ENCODE measurements at regions of chr11 and their contacts with region 1.

Region 1: GRCh38 chr11:46367244-46367915 is 14.1 kb upstream of the MDK start:
- DNase-seq: peak; percentile 85
- ATAC-seq: peak; percentile 93
- H3K4me3 Mint-ChIP-seq: no peak overlapping the region
- H3K27ac Mint-ChIP-seq: no peak overlapping the region
- H3K4me1 Mint-ChIP-seq: peaks cover 22% of the 10 kb centered on the region
- H3K27me3 Mint-ChIP-seq: no peaks in the 10 kb centered on the region

Region 2: GRCh38 chr11:46315033-46315738 is 52.2 kb before region 1 on chr11:
- CTCF ChIA-PET with region 1: interaction called, 10 read pairs
- DNase-seq: peak; percentile 82
- ATAC-seq: peak; percentile 73
- H3K4me3 Mint-ChIP-seq: no peak overlapping the region
- H3K27ac Mint-ChIP-seq: no peak overlapping the region
- H3K4me1 Mint-ChIP-seq: peaks cover 21% of the 10 kb centered on the region
- H3K27me3 Mint-ChIP-seq: peaks cover 2% of the 10 kb centered on the region

Region 3: DNA sequence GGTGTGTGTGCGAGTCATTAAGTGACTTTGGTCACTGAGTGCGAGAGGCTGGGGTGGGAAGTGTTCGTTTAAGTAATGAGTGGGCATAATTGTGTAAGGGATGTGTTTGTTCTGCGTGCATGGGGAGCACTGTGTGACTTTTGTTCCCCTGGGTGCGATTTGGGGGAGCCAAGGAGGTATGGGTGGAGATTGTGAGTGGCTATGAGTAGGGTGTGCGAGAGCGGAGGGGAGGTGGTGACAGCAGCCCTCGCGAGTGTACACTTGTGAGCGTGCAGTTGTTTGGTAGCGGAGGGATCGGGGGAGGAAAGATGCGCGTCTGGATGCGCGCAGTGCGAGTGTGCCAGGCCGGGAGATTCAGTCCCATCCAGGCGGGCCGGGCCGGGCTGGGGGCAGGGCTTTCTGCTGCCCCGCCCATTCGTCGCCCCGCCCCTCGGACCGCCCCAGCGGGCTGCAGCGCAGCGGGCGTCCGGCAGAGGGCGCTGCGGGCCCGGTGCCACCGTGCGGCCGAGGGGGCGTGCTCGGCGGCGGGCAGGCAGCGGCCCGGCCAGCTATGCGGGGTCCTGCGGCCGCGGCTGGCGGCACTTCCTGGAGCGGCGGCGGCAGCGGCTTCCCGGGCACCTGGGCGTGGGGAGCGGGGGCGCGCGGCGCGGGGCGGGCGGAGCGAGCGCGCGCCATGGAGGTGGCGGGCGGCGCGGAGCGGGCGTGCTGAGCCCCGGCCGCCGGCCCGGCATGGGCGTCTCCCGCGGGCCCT is 20.3 kb before region 1 on chr11 and contains the start of gene DGKZ:
- CTCF ChIA-PET with region 1: interaction called, 444 read pairs
- DNase-seq: peak; percentile 88
- ATAC-seq: peak; percentile 75
- H3K4me3 Mint-ChIP-seq: peak within 1 kb of the TSS; percentile 89
- H3K27ac Mint-ChIP-seq: peak within 1 kb of the TSS; percentile 94
- H3K4me1 Mint-ChIP-seq: peaks cover 66% of the 10 kb centered on the region
- H3K27me3 Mint-ChIP-seq: peaks cover 21% of the 10 kb centered on the region
- total RNA-seq, gene DGKZ: 96.9 to 132 TPM

Region 4: DNA sequence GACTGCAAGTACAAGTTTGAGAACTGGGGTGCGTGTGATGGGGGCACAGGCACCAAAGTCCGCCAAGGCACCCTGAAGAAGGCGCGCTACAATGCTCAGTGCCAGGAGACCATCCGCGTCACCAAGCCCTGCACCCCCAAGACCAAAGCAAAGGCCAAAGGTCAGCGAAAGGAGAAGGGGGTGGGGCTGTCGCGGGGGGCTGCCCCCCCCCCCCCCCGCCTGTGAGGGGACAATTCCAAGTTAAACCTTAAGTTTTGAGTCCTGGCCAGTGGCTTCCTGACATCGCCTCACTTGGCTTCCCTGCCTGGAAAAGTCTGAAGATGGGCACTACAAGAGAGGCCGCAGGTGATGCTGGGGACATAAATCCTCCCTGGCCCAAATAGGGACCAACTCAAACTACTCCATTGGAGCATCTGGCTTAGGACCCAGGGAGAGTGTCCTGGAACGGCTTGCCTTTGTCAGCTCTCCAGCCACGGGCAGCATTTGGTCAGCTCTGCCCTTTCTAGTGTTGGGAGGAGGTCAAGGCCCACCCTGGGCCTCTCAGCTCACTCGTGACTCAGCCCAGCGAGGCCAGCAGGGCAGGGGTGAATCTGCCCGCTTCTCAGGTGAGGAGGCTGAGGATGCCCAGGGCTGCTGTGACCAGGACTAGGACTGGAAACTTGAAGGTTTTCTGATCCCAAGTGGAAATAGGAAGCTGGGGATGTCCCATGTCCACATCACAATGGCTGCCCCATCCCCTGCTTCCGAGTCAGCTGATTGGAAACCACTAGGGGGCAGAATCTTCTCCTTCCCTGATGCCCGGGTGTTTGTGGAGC is 15.4 kb after region 1 on chr11:
- CTCF ChIA-PET with region 1: interaction called, 21 read pairs
- DNase-seq: no peak
- ATAC-seq: no peak
- H3K4me3 Mint-ChIP-seq: no peak overlapping the region
- H3K27ac Mint-ChIP-seq: no peak overlapping the region
- H3K4me1 Mint-ChIP-seq: peaks cover 20% of the 10 kb centered on the region
- H3K27me3 Mint-ChIP-seq: peaks cover 38% of the 10 kb centered on the region

Region 5: DNA sequence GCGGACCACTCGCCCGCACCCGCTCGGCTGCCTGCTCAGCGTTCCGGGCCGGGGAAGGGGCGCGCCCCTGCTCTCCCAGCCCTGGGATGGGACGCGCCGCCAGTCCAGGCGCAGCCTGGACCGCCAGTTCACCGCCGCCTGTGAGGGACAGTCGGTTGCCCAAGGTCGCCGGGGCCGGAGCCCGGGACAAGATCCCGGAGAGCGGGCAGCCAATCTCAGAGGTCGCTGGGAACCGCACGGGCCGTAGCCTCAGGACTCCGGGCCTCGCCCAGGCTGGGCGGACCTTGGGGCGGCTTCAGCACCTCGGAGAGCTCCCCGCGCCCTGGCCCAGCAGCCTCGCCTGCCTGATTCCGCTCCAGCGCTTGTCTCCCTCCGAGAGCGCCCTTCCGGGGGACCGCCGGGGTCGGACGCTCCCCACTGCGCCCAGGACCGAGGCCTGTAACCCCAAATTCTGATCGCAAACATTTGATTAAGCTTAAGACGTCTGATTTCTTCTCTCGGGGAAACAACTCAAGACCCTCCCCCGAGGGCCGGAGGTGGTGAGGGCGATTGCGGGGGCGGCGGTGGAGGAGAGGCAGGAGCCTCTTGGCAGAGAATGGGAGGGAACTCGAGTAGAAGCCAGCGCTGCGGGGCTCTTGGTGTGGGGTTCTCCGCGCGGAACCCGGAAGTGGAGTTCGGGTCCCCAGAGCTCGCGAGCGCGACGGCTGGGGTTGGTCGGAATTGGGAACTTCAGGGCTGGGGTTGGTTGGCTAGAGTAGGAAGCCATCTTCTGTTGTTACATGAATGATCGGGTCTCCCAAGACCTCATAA is 25.2 kb after region 1 on chr11:
- CTCF ChIA-PET with region 1: interaction called, 16 read pairs
- DNase-seq: peak; percentile 85
- ATAC-seq: peak; percentile 84
- H3K4me3 Mint-ChIP-seq: peak overlapping the region; percentile 51
- H3K27ac Mint-ChIP-seq: no peak overlapping the region
- H3K4me1 Mint-ChIP-seq: peaks cover 32% of the 10 kb centered on the region
- H3K27me3 Mint-ChIP-seq: peaks cover 46% of the 10 kb centered on the region